Spleen (tissue), 13 donors: ENCODE measurements at regions of chr2 and their contacts with region 1.

Region 1: GRCh38 chr2:229910832-229911412 is 10.9 kb downstream of the TRIP12 start:
- DNase-seq: no peak
- H3K4me3 ChIP-seq: no peak overlapping the region
- H3K27ac ChIP-seq: peak overlapping the region in 1 of 8 donors; percentile 34
- H3K4me1 ChIP-seq: peaks cover 33 to 91% (median 67%) of the 10 kb centered on the region in 6 donors
- H3K27me3 ChIP-seq: no peaks in the 10 kb centered on the region
- CTCF ChIP-seq: peak in 7 of 11 experiments; percentile 11 to 45 (median 36)
- POLR2A ChIP-seq: no peak

Region 2: DNA sequence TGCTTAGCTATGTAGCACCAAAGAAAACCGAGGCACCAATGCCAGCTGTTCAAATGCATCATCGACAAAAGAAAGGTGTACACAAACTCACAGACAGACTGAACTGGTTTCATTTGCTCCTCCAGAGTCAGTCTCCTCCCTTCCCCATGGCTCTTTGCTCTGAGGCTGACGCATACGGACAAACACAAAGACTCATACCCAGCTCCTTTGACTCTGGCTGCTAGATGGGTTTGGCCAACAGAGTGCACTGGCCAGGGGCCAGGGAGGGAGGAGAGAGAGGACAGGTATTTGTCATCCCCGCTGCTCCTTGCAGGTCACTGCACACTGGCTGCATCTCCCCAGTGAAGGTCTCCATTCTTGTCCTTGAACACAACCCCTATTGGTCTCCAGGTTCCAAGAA is 237.2 kb before region 1 on chr2:
- intact Hi-C with region 1: no loop called
- DNase-seq: no peak
- H3K4me3 ChIP-seq: no peak overlapping the region
- H3K27ac ChIP-seq: no peak overlapping the region
- H3K4me1 ChIP-seq: no peaks in the 10 kb centered on the region
- H3K27me3 ChIP-seq: peaks cover 0 to 83% (median 5%) of the 10 kb centered on the region in 7 donors
- CTCF ChIP-seq: no peak
- POLR2A ChIP-seq: no peak

Region 3: GRCh38 chr2:229800997-229801754 is 109.7 kb before region 1 on chr2:
- intact Hi-C with region 1: loop called (anchors 10 kb)
- DNase-seq: peak; percentile 77
- H3K4me3 ChIP-seq: no peak overlapping the region
- H3K27ac ChIP-seq: no peak overlapping the region
- H3K4me1 ChIP-seq: no peaks in the 10 kb centered on the region
- H3K27me3 ChIP-seq: no peaks in the 10 kb centered on the region
- CTCF ChIP-seq: peak in 10 of 11 experiments; percentile 16 to 73 (median 61)
- POLR2A ChIP-seq: no peak